ENCODE measurements at regions of chr5 and their contacts with region 1.

Region 1: DNA sequence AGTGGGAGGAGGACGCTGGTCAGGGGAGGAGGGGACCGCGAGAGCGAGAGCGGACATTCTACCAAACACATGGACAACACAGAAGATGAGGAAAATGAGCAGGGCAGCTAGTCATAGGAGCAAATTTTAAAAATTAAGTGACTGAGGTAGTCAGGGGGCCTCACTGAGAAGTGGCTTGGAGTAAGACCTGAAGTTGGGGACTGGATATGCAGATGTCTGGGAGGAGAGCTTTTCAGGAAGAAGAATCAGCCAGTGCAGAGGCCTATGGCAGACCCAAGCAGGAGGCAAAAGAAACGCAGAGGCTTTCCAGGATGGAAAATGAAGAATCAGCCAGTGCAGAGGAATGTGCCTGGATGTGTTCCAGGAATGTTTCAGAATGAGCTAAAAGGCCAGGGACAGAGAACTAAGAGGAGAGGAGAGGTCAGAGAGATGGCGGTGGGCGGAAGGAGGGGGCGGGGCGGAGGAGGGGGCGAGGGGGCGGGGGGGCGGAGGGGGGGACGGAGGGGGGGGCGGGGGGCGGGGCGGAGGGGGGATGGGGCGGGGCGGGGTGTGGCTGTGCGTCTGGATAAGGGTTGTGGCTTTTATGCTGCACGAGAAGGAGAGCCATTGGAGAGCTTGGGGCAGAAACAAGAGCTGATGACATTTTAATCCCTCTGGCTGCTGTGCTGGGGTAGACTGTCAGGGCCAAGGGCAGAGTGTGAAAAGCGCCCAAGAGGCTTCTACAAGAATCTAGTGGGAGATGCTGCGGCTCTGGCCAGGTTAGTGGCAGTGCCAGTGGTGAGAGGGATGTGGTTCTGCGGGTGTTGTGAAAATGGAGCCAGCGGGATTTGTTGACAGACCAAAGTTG is 129.6 kb downstream of the KCNIP1 start:
- DNase-seq: no peak
- H3K4me3 ChIP-seq: peak overlapping the region; percentile 31
- H3K27ac ChIP-seq: no peak overlapping the region
- H3K4me1 ChIP-seq: no peaks in the 10 kb centered on the region
- CTCF ChIP-seq: peak; percentile 53; the same call in 1 of the 2 replicates

Region 2: GRCh38 chr5:170434966-170435605 is 198.4 kb before region 1 on chr5:
- CTCF ChIA-PET with region 1: interaction called, 3 read pairs
- POLR2A ChIA-PET with region 1: no interaction called
- intact Hi-C with region 1: loop called (anchors 1 kb)
- DNase-seq: peak; percentile 56
- H3K4me3 ChIP-seq: no peak overlapping the region
- H3K27ac ChIP-seq: no peak overlapping the region
- H3K4me1 ChIP-seq: no peaks in the 10 kb centered on the region
- CTCF ChIP-seq: peak; percentile 86

Region 3: GRCh38 chr5:170603578-170604565 is 29.6 kb before region 1 on chr5:
- CTCF ChIA-PET with region 1: no interaction called
- POLR2A ChIA-PET with region 1: no interaction called
- intact Hi-C with region 1: loop called (anchors 1 kb)
- DNase-seq: peak; percentile 50
- H3K4me3 ChIP-seq: no peak overlapping the region
- H3K27ac ChIP-seq: no peak overlapping the region
- H3K4me1 ChIP-seq: no peaks in the 10 kb centered on the region
- CTCF ChIP-seq: peak; percentile 83

Region 4: DNA sequence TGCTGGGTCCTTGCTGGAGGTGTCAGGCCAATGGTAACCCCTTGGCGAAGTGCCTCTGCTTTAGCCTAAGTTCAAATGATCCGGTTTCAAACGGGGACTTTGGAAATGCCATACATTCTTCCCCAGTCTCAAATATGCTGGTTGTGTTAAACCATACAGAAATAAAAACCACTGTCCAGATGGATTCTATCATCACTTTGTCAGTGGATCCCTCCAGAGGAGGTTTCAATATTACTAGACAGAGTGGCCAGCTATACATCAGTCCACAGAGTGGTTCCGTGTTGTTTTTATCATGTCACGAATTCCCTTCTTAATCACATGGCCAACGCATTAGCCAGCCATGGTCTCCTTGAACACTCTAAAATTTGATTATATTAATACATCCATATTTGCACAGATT is 221.1 kb after region 1 on chr5:
- CTCF ChIA-PET with region 1: no interaction called
- POLR2A ChIA-PET with region 1: no interaction called
- intact Hi-C with region 1: no loop called
- DNase-seq: no peak
- H3K4me3 ChIP-seq: no peak overlapping the region
- H3K27ac ChIP-seq: no peak overlapping the region
- H3K4me1 ChIP-seq: no peaks in the 10 kb centered on the region
- CTCF ChIP-seq: no peak